ENCODE measurements at regions of chr15 and their contacts with region 1.

Region 1: DNA sequence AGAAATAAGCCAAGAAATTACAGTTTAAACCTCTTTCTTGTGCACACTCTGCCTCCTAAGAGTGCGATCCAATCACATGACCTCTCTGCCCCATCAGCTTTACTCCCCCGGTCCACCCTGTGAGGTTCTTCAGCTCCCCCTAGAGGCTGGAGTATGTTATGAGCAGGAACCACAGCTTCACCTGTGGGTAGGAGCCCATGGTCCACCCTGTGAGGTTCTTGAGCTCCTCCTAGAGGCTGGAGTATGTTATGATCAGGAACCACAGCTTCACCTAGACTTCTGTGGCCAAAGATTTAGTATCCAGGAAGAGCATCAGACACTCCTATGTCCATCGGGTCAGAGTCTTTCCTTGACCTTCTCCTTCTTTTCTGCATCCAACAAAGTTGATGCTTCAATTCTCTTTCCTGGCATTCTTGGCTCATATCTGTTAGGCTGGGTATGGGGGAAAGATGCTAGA is 163.9 kb downstream of the MINAR1 start:
- DNase-seq: no peak
- H3K4me3 ChIP-seq: no peak overlapping the region
- CTCF ChIP-seq: peak; percentile 66

Region 2: DNA sequence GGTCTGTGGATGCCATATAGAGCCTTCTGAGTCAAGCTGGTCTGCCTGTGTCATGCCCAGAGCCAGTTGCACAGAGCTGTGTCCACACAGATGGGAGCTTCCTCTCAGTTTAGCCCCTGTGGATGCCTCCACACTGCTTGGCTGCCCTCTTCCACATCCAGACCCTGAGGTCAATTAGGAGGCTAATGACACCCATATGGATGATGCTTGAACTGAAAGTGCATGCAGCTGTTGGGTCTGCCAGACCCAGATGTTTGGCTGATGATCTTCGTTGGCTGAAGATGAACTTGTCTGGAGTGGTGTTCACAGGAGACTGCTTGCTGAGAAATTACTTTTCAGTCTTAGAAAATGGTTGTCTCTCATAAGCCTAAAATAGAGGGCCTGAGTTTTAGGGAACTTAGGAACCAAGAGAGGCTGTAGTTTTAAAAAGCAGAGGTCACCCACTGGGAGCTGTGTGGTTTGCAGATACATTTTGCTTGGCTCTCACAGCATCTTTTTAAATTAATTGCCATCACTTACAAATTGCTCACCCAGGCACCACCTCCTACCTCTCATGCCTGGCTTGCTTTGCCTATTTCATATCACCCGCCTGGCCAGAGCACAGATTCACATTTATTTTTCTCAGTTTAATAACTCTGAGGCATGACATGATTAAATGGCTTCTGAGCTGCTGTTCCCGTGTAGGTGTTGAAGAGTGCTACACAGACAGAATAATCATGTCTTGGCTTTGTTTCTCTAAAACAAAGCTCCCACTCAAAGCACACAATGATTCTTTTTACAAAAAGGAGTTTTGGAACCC is 12.2 kb after region 1 on chr15:
- CTCF ChIA-PET with region 1: interaction called, 17 read pairs
- POLR2A ChIA-PET with region 1: no interaction called
- DNase-seq: no peak
- H3K4me3 ChIP-seq: no peak overlapping the region
- CTCF ChIP-seq: no peak

Region 3: GRCh38 chr15:79981831-79982455 is 385.9 kb after region 1 on chr15:
- CTCF ChIA-PET with region 1: no interaction called
- POLR2A ChIA-PET with region 1: no interaction called
- DNase-seq: no peak
- H3K4me3 ChIP-seq: no peak overlapping the region
- CTCF ChIP-seq: no peak

Measured in AG04449 (cell line).